ENCODE measurements at regions of chr5 and their contacts with region 1.

Region 1: GRCh38 chr5:35803191-35803651 is 53.5 kb upstream of the IL7R start:
- DNase-seq: peak; percentile 70
- H3K4me3 ChIP-seq: no peak overlapping the region
- H3K27ac ChIP-seq: no peak overlapping the region
- H3K4me1 ChIP-seq: peaks cover 22% of the 10 kb centered on the region
- CTCF ChIP-seq: no peak

Region 2: DNA sequence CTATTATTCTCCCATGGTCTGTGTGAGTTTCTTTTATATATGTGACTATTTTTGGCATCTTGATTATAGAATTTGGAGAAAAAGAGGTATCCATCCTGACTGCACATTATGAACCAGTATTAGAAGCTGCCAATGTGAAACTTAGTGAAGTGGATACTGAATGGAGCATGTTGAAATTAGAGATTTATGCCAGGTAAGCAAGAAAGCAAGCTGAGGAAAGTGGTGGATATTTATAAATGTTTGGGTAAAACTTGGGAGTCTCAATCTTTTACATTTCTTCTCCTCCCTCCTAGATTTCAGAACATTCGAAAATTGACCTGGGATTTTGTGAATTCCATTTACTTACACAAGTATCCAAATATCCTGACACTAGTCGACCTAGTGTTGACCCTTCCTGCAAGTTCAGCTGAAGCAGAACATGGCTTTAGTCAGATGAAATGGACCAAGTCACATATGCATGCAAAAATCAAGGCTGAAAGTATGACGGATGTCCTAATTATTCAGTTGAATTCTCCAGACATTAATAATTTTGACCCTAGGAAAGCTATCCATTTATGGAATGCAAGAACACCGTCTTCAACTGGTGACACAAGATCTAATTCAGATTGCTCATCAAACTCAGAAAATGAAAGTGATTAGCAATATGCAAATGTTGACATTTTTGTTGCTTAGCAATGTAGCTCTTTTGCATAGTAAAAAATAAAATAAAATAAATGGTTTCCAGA is 13.3 kb before region 1 on chr5:
- CTCF ChIA-PET with region 1: interaction called, 3 read pairs
- POLR2A ChIA-PET with region 1: interaction called, 10 read pairs
- intact Hi-C with region 1: no loop called
- DNase-seq: no peak
- H3K4me3 ChIP-seq: no peak overlapping the region
- H3K27ac ChIP-seq: no peak overlapping the region
- H3K4me1 ChIP-seq: peaks cover 4% of the 10 kb centered on the region
- CTCF ChIP-seq: no peak

Region 3: DNA sequence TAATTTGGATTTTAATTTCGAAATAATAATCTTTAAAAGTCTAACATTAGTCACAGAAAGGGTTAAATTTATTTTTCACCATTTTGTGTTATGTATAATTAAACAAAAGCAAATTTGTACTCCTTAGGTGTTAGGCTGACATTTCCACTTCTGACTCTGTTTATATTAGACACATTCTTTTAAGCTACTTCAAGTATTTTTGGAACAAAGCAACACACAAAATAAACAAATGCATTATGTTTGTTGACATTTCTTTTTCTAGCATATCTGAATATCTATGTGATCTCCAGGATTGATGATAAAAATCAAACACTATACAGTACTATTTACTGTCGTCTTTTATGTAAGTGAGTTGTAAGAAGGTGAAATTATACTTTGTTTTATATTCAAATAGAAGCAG is 1029.1 kb after region 1 on chr5:
- CTCF ChIA-PET with region 1: no interaction called
- POLR2A ChIA-PET with region 1: no interaction called
- intact Hi-C with region 1: no loop called
- DNase-seq: no peak
- H3K4me3 ChIP-seq: no peak overlapping the region
- H3K27ac ChIP-seq: no peak overlapping the region
- H3K4me1 ChIP-seq: no peaks in the 10 kb centered on the region
- CTCF ChIP-seq: no peak

Measured in OCI-LY7 (cell line).